HEK293 (cell line): ENCODE measurements at regions of chr2 and their contacts with region 1.

Region 1: GRCh38 chr2:227238238-227239237 is 74.1 kb downstream of the COL4A3 start:
- H3K4me3 ChIP-seq: no peak overlapping the region
- H3K27ac ChIP-seq: no peak overlapping the region
- H3K4me1 ChIP-seq: no peaks in the 10 kb centered on the region
- CTCF ChIP-seq: 0 out of 2 replicates have a peak, but pooled peaks have one; percentile 39

Region 2: DNA sequence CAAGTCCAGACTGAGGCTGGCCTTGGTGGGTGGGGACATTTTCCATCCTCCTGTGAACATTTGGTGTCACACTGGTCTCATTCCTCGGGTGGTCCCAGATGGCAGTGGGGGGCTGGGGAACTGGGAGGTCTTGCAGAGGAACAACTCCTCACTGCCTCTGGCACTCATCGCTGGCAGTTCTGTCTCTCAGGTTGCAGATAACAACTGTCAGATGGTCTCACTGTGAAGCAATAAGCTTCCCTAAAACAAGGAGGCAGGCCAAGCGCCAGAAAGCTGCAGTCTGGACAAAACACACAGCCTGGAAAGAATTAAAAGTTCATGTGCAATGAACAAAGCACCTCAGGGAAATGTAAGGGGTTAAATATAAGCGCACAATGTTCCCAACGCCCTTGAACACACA is 517.0 kb before region 1 on chr2:
- CTCF ChIA-PET with region 1: no interaction called
- POLR2A ChIA-PET with region 1: no interaction called
- H3K4me3 ChIP-seq: no peak overlapping the region
- H3K27ac ChIP-seq: no peak overlapping the region
- H3K4me1 ChIP-seq: 0 out of 2 replicates have a peak, but pooled peaks cover 5% of the 10 kb centered on the region
- CTCF ChIP-seq: no peak

Region 3: GRCh38 chr2:227125506-227125905 is 113.0 kb before region 1 on chr2:
- CTCF ChIA-PET with region 1: interaction called, 28 read pairs
- POLR2A ChIA-PET with region 1: no interaction called
- H3K4me3 ChIP-seq: no peak overlapping the region
- H3K27ac ChIP-seq: no peak overlapping the region
- H3K4me1 ChIP-seq: peaks cover 8% of the 10 kb centered on the region
- CTCF ChIP-seq: no peak

Region 4: GRCh38 chr2:227132986-227133385 is 105.6 kb before region 1 on chr2:
- CTCF ChIA-PET with region 1: interaction called, 74 read pairs
- POLR2A ChIA-PET with region 1: no interaction called
- H3K4me3 ChIP-seq: no peak overlapping the region
- H3K27ac ChIP-seq: no peak overlapping the region
- H3K4me1 ChIP-seq: no peaks in the 10 kb centered on the region
- CTCF ChIP-seq: no peak

Region 5: GRCh38 chr2:227204452-227204851 is 34.1 kb before region 1 on chr2:
- CTCF ChIA-PET with region 1: interaction called, 10 read pairs
- POLR2A ChIA-PET with region 1: no interaction called
- H3K4me3 ChIP-seq: no peak overlapping the region
- H3K27ac ChIP-seq: no peak overlapping the region
- H3K4me1 ChIP-seq: no peaks in the 10 kb centered on the region
- CTCF ChIP-seq: no peak

Region 6: GRCh38 chr2:227228061-227228667 is 10.4 kb before region 1 on chr2:
- CTCF ChIA-PET with region 1: interaction called, 14 read pairs
- POLR2A ChIA-PET with region 1: no interaction called
- H3K4me3 ChIP-seq: no peak overlapping the region; the same call in 1 of the 2 replicates
- H3K27ac ChIP-seq: no peak overlapping the region
- H3K4me1 ChIP-seq: no peaks in the 10 kb centered on the region
- CTCF ChIP-seq: no peak

Region 7: DNA sequence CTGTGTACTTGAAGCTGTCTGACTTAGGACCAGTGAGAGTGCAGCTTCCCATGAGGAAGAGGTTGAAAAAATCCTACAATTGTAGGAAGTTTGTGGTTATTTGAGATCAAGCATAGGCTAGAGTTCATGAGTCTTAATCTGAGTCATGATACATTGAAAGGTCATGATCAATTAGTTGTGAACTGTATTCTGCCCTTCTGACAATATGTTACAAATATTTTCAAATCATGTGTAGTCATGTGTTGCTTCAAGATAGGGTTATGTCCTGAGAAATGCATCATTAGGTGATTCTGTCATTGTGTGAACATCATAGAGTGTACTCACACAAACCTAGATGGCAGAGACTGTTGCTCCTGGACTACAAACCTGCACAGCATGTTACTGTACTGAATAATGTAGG is 18.1 kb after region 1 on chr2:
- CTCF ChIA-PET with region 1: interaction called, 24 read pairs
- POLR2A ChIA-PET with region 1: no interaction called
- H3K4me3 ChIP-seq: no peak overlapping the region
- H3K27ac ChIP-seq: no peak overlapping the region
- H3K4me1 ChIP-seq: no peaks in the 10 kb centered on the region
- CTCF ChIP-seq: no peak

Region 8: DNA sequence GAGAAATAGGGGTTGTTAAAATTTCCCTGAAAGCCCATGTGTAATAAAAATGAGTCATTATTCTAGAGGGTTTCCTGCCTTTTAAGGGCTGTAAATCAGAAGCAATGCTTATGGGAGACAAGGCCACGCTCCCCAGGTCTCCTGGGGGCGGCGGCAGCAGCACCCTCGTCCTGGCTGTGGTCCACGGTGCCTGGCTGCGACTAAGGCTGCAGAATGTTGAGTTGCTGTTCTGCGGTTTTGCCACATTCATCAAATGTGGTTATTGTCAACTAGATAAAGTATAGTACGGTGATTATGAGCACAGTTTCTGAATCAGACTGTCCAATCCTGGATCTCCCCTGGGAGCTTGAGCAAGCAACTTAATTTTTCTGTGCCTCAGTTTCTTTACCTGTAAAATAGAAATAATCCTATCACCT is 221.5 kb after region 1 on chr2:
- CTCF ChIA-PET with region 1: no interaction called
- POLR2A ChIA-PET with region 1: no interaction called
- H3K4me3 ChIP-seq: no peak overlapping the region
- H3K27ac ChIP-seq: no peak overlapping the region
- H3K4me1 ChIP-seq: peaks cover 8% of the 10 kb centered on the region
- CTCF ChIP-seq: no peak